GM10248 (cell line): ENCODE measurements at regions of chr3 and their contacts with region 1.

Region 1: GRCh38 chr3:195909644-195910508 is 1.5 kb upstream of the TNK2 start:
- DNase-seq: peak; percentile 99
- CTCF ChIP-seq: no peak

Region 2: GRCh38 chr3:195863121-195864006 is 46.5 kb before region 1 on chr3:
- CTCF ChIA-PET with region 1: interaction called, 144 read pairs
- POLR2A ChIA-PET with region 1: no interaction called
- DNase-seq: peak; percentile 84
- CTCF ChIP-seq: peak; percentile 94

Region 3: GRCh38 chr3:195886181-195887141 is 23.4 kb before region 1 on chr3:
- CTCF ChIA-PET with region 1: interaction called, 136 read pairs
- POLR2A ChIA-PET with region 1: no interaction called
- DNase-seq: no peak
- CTCF ChIP-seq: no peak

Region 4: DNA sequence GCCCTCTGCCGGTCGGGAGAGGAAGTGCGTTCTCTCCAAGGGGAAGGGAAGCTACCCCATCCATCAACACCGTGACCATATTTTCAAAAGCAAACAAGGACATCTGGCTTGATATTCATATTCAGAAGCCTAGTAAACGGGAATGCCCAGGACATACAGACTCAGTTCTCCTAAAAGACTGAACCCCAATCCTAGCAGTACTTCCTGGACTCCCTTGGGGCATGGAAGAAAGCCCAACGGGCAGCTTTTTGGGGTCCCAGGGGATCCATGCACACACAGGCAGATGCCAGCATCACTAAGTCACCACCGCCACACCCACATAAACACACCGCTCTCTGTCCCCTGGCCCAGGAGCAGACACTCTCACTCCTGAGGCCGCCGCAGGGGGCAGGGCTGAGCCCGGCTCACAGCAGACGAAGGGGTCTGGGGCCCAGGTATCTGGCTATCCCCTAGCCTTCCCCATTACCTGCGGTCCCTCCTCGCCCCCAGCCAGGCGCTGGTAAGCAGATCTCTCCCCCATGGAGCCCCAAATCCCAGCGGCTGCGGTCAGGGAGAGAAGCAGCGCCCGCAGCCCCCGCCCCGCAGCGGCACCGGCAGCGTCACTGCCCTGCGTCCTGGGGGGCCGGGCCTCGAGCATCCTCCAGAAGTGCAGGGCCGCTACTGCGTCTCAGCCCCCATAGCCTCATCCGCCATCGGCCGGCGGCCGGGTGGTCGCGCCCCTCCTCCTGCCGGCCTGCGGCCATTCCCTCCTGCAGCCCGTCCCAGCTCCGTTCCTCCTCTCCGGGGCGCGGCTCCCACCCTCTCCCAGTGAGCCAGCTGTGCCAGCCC is 14.9 kb before region 1 on chr3:
- CTCF ChIA-PET with region 1: interaction called, 136 read pairs
- POLR2A ChIA-PET with region 1: interaction called, 6 read pairs
- DNase-seq: peak; percentile 82
- CTCF ChIP-seq: peak; percentile 97

Region 5: DNA sequence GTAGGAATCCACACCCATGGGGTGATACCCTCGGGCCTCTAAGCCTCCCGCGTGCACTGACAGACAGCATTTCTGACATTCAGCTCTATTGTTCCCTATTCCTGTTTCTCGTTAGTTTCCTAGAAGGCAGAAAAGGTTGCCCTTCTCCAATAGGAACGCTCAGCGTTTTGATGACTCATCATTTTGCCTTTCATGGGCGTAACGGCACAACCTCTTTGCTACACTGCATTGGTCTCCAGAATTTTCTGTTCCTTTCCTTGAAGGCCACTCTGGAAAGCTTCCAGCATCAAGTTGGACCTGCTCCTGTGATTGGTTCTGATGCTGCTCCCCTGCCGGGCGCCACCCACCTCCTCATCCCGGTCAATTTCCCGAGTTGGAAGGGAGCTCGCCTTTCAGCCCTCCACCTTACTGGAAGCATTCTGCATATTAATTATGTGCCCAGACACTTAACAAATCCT is 11.5 kb after region 1 on chr3:
- CTCF ChIA-PET with region 1: interaction called, 26 read pairs
- POLR2A ChIA-PET with region 1: no interaction called
- DNase-seq: no peak
- CTCF ChIP-seq: no peak